Heart left ventricle (tissue), 16 donors: ENCODE measurements at regions of chr16 and their contacts with region 1.

Region 1: GRCh38 chr16:30657866-30658730 is at the start of gene FBRS:
- DNase-seq: peak; percentile 100
- ATAC-seq: peak; percentile 87 to 94 (median 92)
- H3K4me3 ChIP-seq: peak within 1 kb of the TSS; percentile 68 to 96 (median 90)
- H3K27ac ChIP-seq: peak within 1 kb of the TSS; percentile 96 to 100 (median 98)
- H3K4me1 ChIP-seq: peaks cover 0 to 47% (median 39%) of the 10 kb centered on the region in 12 donors
- H3K27me3 ChIP-seq: no peaks in the 10 kb centered on the region
- CTCF ChIP-seq: peak; percentile 74 to 99 (median 90)
- POLR2A ChIP-seq: peak in 1 of 2 donors; percentile 70
- total RNA-seq, gene FBRS: 16.3 to 38.3 (median 31.9) TPM

Region 2: DNA sequence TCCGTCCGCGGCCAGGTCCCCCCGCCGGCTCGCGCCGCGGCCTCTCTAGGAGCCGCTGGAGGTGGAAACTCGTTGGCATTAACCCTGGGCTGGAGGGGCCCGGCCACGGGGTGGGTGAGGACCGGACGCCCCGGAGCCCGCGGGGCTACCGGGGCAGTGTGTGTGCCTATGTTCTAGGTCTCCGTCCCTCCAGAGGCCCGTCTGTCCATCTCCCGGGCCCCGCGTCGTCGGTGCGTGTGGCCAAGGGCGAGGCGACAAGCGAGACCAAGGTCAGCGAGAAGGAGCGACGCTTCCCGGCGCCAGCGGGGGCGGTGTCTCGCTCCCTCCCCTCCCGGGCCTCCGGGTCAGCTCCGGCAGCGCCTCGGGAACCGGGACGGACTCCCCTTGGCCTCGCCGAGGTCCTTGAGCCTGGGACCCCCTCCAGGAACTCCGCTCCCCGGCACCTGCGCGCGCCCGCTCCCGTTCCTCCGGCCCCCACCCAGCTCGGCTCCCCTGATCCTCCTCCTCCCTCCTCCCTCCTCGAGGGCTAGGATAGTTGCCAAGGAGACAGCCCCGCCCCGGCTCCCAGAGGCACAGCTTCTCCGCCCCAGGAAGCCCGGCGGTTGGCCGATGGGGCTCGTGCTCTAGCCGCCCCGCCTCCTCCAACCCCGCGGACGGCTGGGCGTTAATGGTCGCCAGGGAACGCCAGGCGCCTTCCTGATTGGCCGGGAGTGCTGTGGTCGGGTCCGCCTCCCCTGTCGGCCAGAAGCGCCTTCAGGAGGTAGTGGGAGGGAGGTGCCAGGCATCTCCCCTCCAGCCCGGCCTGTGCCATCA is 131.1 kb before region 1 on chr16:
- intact Hi-C with region 1: loop called in 2 of 10 experiments (anchors 2 to 10 kb)
- DNase-seq: peak; percentile 99 to 100 (median 99)
- ATAC-seq: peak; percentile 93 to 97 (median 94)
- H3K4me3 ChIP-seq: peak overlapping the region; percentile 35 to 98 (median 86)
- H3K27ac ChIP-seq: peak overlapping the region; percentile 95 to 100 (median 99)
- H3K4me1 ChIP-seq: peaks cover 0 to 44% (median 19%) of the 10 kb centered on the region in 12 donors
- H3K27me3 ChIP-seq: no peaks in the 10 kb centered on the region
- CTCF ChIP-seq: peak in 10 of 12 donors; percentile 5 to 53 (median 28)
- POLR2A ChIP-seq: peak; percentile 38 to 86

Region 3: GRCh38 chr16:30609926-30610839 is 47.9 kb before region 1 on chr16 and contains the start of gene ZNF689:
- intact Hi-C with region 1: no loop called
- DNase-seq: peak; percentile 93 to 95 (median 94)
- ATAC-seq: peak; percentile 95 to 99 (median 97)
- H3K4me3 ChIP-seq: peak within 1 kb of the TSS; percentile 64 to 99 (median 88)
- H3K27ac ChIP-seq: peak within 1 kb of the TSS; percentile 84 to 99 (median 97)
- H3K4me1 ChIP-seq: peaks cover 0 to 47% (median 10%) of the 10 kb centered on the region in 12 donors
- H3K27me3 ChIP-seq: no peaks in the 10 kb centered on the region
- CTCF ChIP-seq: peak in 1 of 12 donors; percentile 10
- POLR2A ChIP-seq: peak in 1 of 2 donors; percentile 50
- total RNA-seq, gene ZNF689: 4.0 to 7.9 (median 6.6) TPM

Region 4: DNA sequence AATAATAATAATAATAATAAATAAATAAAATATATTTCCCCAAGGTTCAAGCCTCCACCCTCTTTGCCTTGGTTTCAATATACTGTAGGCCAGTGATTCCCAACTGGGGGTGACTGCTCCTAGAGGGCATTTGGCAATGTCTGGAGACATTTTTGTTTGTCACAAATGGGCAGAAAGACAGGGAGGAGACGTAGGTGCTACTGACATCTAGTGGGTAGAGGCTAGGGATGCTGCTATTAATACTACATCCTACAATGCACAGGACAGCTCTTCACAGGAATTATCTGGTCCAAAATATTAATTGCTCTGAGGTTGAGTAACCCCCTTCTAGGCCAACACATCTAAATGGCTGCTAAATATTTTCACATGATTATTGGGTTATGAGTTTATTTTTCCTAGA is 20.2 kb before region 1 on chr16:
- intact Hi-C with region 1: no loop called
- DNase-seq: no peak
- ATAC-seq: no peak
- H3K4me3 ChIP-seq: no peak overlapping the region
- H3K27ac ChIP-seq: no peak overlapping the region
- H3K4me1 ChIP-seq: peaks cover 0 to 19% (median 9%) of the 10 kb centered on the region in 12 donors
- H3K27me3 ChIP-seq: no peaks in the 10 kb centered on the region
- CTCF ChIP-seq: peak in 5 of 12 donors; percentile 17 to 32 (median 28)
- POLR2A ChIP-seq: no peak